AG04450 (cell line): ENCODE measurements at regions of chr10 and their contacts with region 1.

Region 1: DNA sequence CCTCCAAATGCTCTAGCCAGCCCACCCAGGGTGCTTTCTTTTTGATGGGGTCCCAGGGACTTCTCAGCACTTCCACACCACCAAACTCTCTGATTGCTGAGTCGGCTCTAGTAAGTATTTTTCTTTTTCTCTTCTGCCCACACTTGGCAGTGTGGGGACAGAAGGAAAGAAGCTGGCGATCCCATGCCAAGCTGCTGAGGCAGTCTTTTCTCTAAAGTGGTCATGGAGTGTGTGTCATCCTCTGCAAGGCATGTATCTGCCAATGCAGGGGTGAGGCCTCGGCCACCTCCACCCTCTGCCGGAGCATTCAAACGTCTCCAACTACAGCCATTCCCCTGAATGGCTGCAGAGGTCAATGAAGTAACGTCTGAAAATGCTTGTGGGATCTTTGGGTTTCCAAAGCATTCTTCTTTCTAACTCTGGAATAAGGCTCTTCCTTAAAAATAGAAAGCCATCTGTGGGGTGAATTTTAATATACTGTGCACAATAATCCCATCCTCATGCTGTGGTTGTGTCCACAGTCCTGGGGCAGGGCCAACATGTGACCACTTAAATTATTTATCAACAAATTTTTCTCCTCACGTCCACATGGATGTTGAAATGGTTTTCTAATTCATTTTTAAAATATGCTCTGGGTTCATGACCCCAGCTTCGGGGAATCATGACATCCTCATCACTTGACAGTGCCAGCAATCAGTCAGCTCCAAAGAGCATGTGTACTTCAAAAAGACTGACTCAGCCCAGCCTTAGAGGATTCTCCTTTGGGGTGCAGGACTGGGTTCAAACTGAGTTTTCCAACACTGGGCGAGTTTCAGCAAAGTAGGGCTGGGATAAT is 171.3 kb upstream of the ITGB1 start:
- DNase-seq: peak; percentile 78
- H3K4me3 ChIP-seq: no peak overlapping the region
- H3K27ac ChIP-seq: peak overlapping the region; percentile 95
- H3K27me3 ChIP-seq: no peaks in the 10 kb centered on the region
- CTCF ChIP-seq: no peak

Region 2: DNA sequence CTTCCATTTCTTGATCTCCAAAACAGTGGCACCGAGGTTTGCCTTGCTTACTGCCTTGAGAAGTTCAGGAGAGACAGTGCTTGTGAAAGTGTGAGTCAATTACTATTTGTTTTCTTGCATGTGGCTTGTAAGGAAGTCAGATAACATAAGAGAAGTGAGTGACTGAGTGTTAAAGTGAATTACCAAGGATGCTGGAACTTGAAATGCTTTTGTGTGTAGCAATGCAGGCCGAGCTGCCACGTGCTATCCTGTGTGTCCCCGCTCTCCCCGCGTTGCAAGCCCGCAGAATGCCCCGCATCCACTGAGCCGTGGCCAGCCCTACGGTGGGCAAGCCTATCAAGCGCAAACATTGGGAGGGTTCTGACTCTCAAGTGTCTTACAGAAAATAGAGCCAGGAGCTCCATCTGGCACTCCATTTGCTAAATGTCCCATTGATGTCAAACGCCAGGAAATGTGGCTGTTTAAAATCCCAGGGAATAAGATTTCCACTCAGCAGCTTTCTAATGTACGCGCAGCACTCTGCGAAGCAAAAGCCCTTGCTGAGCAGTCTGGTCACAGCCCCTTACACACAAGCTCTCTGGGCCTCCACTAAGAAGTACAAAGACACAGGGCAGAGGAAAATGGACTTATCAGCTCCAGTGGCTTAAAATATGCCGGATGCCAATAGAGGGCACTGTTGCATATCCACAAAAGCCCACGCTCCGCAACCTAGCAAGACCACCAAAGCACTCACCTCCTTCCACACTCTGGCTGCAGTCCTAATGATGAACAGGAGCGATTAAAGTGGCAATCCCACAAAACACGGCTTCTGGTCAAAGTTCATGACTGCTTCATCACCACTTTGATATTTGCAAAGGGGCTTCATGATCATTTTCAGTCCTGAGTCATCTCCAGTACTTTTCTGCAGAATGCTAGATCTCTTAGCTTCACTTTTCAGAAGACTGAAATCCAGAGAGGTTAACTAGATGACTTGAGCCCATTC is 13.3 kb before region 1 on chr10:
- CTCF ChIA-PET with region 1: interaction called, 6 read pairs
- POLR2A ChIA-PET with region 1: interaction called, 19 read pairs
- DNase-seq: no peak
- H3K4me3 ChIP-seq: no peak overlapping the region
- H3K27ac ChIP-seq: peak overlapping the region; percentile 48
- H3K27me3 ChIP-seq: no peaks in the 10 kb centered on the region
- CTCF ChIP-seq: peak; percentile 63